MCF 10A (cell line): ENCODE measurements at regions of chr2 and their contacts with region 1.

Region 1: DNA sequence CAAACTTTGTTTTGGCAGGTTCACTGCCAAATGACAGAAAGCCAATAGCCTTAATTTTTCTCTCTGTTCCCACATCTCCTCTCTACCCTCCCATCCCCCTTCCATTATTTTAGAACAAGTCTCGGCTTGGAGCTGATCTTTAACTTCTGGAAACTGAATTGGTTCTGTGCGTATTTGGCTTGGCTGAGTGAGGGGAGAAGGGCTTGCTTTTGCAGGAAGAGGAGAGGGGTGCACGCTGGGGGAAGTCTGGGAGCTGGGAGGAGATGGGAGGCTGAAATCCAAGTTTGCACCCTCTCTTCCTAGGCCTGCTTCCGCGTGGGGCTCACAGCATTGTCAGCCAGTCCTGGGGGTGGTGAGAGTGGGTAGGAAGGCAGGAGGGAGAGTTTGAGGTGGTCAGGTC is 176.1 kb upstream of the SPRED2 start:
- DNase-seq: no peak
- H3K4me3 Mint-ChIP-seq: no peak overlapping the region
- H3K27ac Mint-ChIP-seq: no peak overlapping the region
- H3K4me1 Mint-ChIP-seq: peaks cover 34% of the 10 kb centered on the region
- H3K27me3 Mint-ChIP-seq: no peaks in the 10 kb centered on the region
- CTCF ChIP-seq: no peak

Region 2: GRCh38 chr2:65436169-65436823 is 172.2 kb before region 1 on chr2:
- CTCF ChIA-PET with region 1: no interaction called
- POLR2A ChIA-PET with region 1: no interaction called
- intact Hi-C with region 1: no loop called
- DNase-seq: peak; percentile 94
- H3K4me3 Mint-ChIP-seq: peak overlapping the region; percentile 83
- H3K27ac Mint-ChIP-seq: peak overlapping the region; percentile 91
- H3K4me1 Mint-ChIP-seq: peaks cover 5% of the 10 kb centered on the region
- H3K27me3 Mint-ChIP-seq: no peaks in the 10 kb centered on the region
- CTCF ChIP-seq: no peak

Region 3: GRCh38 chr2:65479524-65479923 is 128.9 kb before region 1 on chr2:
- CTCF ChIA-PET with region 1: no interaction called
- POLR2A ChIA-PET with region 1: no interaction called
- intact Hi-C with region 1: no loop called
- DNase-seq: no peak
- H3K4me3 Mint-ChIP-seq: no peak overlapping the region
- H3K27ac Mint-ChIP-seq: no peak overlapping the region
- H3K4me1 Mint-ChIP-seq: no peaks in the 10 kb centered on the region
- H3K27me3 Mint-ChIP-seq: no peaks in the 10 kb centered on the region
- CTCF ChIP-seq: no peak

Region 4: DNA sequence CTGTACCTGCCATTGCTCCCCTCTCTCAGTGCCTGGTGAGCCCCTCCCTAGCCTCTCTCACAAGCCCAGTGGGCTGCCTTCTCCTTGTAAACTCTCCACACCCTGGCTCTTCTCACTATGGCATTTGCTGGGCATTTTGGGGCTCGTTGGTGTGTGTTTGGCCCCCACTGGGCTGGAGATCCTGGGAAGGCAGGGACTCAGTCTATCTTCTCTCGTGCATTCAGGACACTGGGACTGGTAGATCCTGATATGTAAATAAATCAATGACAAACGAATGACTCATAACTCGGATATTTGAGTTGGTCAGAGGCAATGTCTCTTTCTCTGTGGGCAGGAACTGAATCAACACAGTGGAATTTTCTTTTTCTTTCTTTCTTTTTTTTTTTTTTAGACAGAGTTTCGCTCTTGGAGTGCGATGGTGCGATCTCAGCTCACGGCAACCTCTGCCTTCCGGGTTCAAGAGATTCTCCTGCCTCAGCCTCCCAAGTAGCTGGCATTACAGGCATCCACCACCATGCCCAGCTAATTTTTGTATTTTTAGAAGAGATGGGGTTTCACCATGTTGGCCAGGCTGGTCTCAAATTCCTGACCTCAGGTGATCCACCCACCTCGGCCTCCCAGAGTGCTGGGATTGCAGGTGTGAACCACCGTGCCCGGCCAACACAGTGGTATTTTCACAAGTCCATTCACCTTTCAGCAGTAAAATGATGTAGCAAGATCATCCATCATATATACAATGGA is 31.4 kb before region 1 on chr2:
- CTCF ChIA-PET with region 1: interaction called, 3 read pairs
- POLR2A ChIA-PET with region 1: interaction called, 12 read pairs
- intact Hi-C with region 1: no loop called
- DNase-seq: peak; percentile 89
- H3K4me3 Mint-ChIP-seq: peak overlapping the region; percentile 42
- H3K27ac Mint-ChIP-seq: peak overlapping the region; percentile 95
- H3K4me1 Mint-ChIP-seq: peaks cover 19% of the 10 kb centered on the region
- H3K27me3 Mint-ChIP-seq: no peaks in the 10 kb centered on the region
- CTCF ChIP-seq: no peak

Region 5: GRCh38 chr2:65834771-65835475 is 226.5 kb after region 1 on chr2:
- CTCF ChIA-PET with region 1: no interaction called
- POLR2A ChIA-PET with region 1: no interaction called
- intact Hi-C with region 1: no loop called
- DNase-seq: no peak
- H3K4me3 Mint-ChIP-seq: no peak overlapping the region
- H3K27ac Mint-ChIP-seq: no peak overlapping the region
- H3K4me1 Mint-ChIP-seq: no peaks in the 10 kb centered on the region
- H3K27me3 Mint-ChIP-seq: no peaks in the 10 kb centered on the region
- CTCF ChIP-seq: no peak